ENCODE measurements at regions of chr2 and their contacts with region 1.

Region 1: GRCh38 chr2:162301151-162301804 is 17.2 kb downstream of the IFIH1 start:
- DNase-seq: peak in 3 of 5 donors; percentile 18 to 36 (median 31)
- ATAC-seq: peak in 2 of 4 donors; percentile 37 to 63
- H3K4me3 ChIP-seq: no peak overlapping the region
- H3K27ac ChIP-seq: no peak overlapping the region
- H3K4me1 ChIP-seq: peaks cover 0 to 11% (median 0%) of the 10 kb centered on the region in 12 donors
- H3K27me3 ChIP-seq: no peaks in the 10 kb centered on the region
- CTCF ChIP-seq: peak; percentile 79 to 93 (median 88)
- POLR2A ChIP-seq: no peak

Region 2: GRCh38 chr2:161580426-161580825 is 720.9 kb before region 1 on chr2:
- intact Hi-C with region 1: loop called in 6 of 10 experiments (anchors 5 to 10 kb)
- DNase-seq: no peak
- ATAC-seq: no peak
- H3K4me3 ChIP-seq: no peak overlapping the region
- H3K27ac ChIP-seq: no peak overlapping the region
- H3K4me1 ChIP-seq: no peaks in the 10 kb centered on the region
- H3K27me3 ChIP-seq: no peaks in the 10 kb centered on the region
- CTCF ChIP-seq: no peak
- POLR2A ChIP-seq: no peak

Region 3: GRCh38 chr2:161586517-161587167 is 714.6 kb before region 1 on chr2:
- intact Hi-C with region 1: loop called in 9 of 10 experiments (anchors 2 to 10 kb)
- DNase-seq: no peak
- ATAC-seq: no peak
- H3K4me3 ChIP-seq: no peak overlapping the region
- H3K27ac ChIP-seq: no peak overlapping the region
- H3K4me1 ChIP-seq: no peaks in the 10 kb centered on the region
- H3K27me3 ChIP-seq: no peaks in the 10 kb centered on the region
- CTCF ChIP-seq: peak; percentile 34 to 63 (median 53)
- POLR2A ChIP-seq: no peak

Region 4: GRCh38 chr2:162007447-162008040 is 293.7 kb before region 1 on chr2:
- intact Hi-C with region 1: loop called in 5 of 10 experiments (anchors 10 kb)
- DNase-seq: no peak
- ATAC-seq: no peak
- H3K4me3 ChIP-seq: no peak overlapping the region
- H3K27ac ChIP-seq: no peak overlapping the region
- H3K4me1 ChIP-seq: peaks cover 0 to 5% (median 0%) of the 10 kb centered on the region in 12 donors
- H3K27me3 ChIP-seq: no peaks in the 10 kb centered on the region
- CTCF ChIP-seq: peak; percentile 59 to 90 (median 75)
- POLR2A ChIP-seq: no peak

Region 5: GRCh38 chr2:162153608-162154224 is 147.6 kb before region 1 on chr2:
- intact Hi-C with region 1: loop called in 3 of 10 experiments (anchors 2 to 5 kb)
- DNase-seq: peak in 2 of 5 donors; percentile 23 to 25
- ATAC-seq: peak in 1 of 4 donors; percentile 49
- H3K4me3 ChIP-seq: no peak overlapping the region
- H3K27ac ChIP-seq: no peak overlapping the region
- H3K4me1 ChIP-seq: no peaks in the 10 kb centered on the region
- H3K27me3 ChIP-seq: peaks cover 0 to 9% (median 0%) of the 10 kb centered on the region in 9 donors
- CTCF ChIP-seq: peak in 10 of 12 donors; percentile 25 to 57 (median 43)
- POLR2A ChIP-seq: no peak

Region 6: DNA sequence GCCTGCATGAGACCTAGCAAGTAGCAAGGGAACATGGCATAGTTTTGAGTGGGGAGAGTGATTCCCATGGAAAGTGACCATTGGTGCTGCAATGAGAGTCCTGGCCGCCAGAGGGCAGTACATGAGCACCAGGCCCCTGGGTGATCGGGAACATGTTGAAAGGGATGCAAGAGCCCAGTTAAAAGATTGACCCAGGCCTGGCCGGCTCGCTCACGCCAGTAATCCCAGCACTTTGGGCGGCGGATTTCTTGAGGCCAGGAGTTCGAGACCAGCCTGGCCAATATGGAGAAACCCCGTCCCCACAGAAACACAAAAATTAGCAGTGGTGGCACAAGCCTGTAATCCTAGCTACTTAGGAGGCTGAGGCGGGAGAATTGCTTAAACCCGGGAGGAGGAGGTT is 80.2 kb before region 1 on chr2:
- intact Hi-C with region 1: loop called (anchors 1 to 5 kb)
- DNase-seq: peak; percentile 49 to 83 (median 53)
- ATAC-seq: peak; percentile 51 to 87 (median 72)
- H3K4me3 ChIP-seq: no peak overlapping the region
- H3K27ac ChIP-seq: no peak overlapping the region
- H3K4me1 ChIP-seq: peaks cover 0 to 16% (median 0%) of the 10 kb centered on the region in 12 donors
- H3K27me3 ChIP-seq: no peaks in the 10 kb centered on the region
- CTCF ChIP-seq: peak; percentile 69 to 89 (median 80)
- POLR2A ChIP-seq: no peak

Measured in heart left ventricle (tissue), 16 donors.